Endothelial cell of umbilical vein (primary cell): ENCODE measurements at regions of chr16 and their contacts with region 1.

Region 1: DNA sequence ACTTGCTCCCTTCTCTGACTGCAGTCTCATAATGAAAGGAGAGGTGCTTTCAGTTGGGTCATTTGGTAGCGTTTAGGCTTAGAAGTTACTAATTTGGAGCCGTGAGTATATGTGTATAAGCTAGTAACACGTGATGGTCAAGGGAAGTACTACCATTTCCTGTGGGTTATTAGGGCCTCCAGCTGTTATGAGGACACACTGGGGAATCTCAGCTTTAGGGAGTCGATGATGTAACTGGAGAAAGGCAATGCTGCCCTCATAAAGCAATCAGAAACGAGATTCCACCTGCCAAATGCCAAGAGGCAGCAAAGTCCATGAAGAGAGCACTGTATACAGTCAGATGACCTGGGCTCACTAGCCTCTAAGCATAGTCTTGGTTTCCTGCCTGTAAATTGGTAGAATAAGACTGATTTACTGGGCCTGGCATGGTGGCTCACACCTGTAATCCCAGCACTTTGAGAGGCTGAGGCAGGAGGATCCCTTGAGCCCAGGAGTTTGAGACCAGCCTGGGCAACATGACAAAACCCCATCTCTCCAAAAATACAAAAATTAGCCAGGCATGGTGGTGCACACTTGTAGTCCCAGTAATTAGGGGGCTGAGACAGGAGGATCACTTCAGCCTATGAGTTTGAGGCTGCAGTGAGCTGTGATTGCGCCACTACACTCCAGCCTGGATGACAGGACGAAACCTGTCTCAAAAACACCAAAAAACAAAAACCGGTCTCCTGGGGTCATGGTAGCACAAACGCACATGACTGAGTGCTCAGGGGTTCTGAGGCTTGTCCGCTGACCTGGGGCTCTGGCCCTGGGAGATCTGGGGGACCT is 53.0 kb downstream of the SF3B3 start:
- DNase-seq: peak; percentile 85
- H3K4me3 ChIP-seq: no peak overlapping the region
- H3K27ac ChIP-seq: peak overlapping the region; percentile 41
- H3K4me1 ChIP-seq: peaks cover 55% of the 10 kb centered on the region
- H3K27me3 ChIP-seq: no peaks in the 10 kb centered on the region
- CTCF ChIP-seq: no peak
- POLR2A ChIP-seq: peak; percentile 47

Region 2: DNA sequence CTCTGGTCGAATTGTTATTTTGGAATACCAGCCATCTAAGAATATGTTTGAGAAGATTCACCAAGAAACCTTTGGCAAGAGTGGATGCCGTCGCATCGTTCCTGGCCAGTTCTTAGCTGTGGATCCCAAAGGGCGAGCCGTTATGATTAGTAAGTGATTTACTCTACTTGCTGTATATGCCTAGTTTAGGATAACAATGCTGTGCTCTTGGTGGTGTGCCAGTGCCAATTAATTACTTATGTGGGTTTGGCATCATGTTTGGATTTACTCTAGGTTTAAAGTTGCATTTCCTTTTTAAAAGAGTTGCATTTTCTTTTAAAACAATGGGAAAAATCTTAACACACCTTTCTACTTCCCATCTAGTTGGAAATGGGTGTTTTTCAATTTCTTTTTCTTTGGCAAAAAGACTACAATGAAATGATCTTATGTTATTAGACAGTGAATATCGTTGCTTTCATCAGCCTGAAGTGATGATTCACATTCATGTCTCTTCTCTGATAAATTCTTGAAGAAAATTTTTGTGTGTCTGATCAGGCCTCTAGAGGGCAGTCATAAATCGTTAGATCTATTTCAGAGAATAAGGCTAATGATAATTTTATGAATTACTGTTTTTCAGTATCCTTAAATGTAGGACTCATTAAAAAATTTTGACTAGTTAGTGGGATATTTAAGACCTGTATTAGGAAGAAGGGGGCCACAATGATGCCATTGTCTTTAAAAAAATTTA is 47.4 kb before region 1 on chr16:
- CTCF ChIA-PET with region 1: interaction called, 3 read pairs
- POLR2A ChIA-PET with region 1: no interaction called
- dilution Hi-C with region 1: no loop called
- intact Hi-C with region 1: loop called (anchors 5 kb)
- DNase-seq: peak; percentile 69
- H3K4me3 ChIP-seq: no peak overlapping the region
- H3K27ac ChIP-seq: peak overlapping the region; percentile 10
- H3K4me1 ChIP-seq: peaks cover 28% of the 10 kb centered on the region
- H3K27me3 ChIP-seq: no peaks in the 10 kb centered on the region
- CTCF ChIP-seq: peak in 1 of 2 donors; percentile 23
- POLR2A ChIP-seq: no peak

Region 3: GRCh38 chr16:70589998-70590471 is 13.4 kb after region 1 on chr16:
- CTCF ChIA-PET with region 1: interaction called, 10 read pairs
- POLR2A ChIA-PET with region 1: interaction called, 5 read pairs
- dilution Hi-C with region 1: no loop called
- intact Hi-C with region 1: loop called (anchors 2 kb)
- DNase-seq: peak; percentile 19
- H3K4me3 ChIP-seq: no peak overlapping the region
- H3K27ac ChIP-seq: no peak overlapping the region
- H3K4me1 ChIP-seq: peaks cover 9% of the 10 kb centered on the region
- H3K27me3 ChIP-seq: no peaks in the 10 kb centered on the region
- CTCF ChIP-seq: no peak
- POLR2A ChIP-seq: no peak

Region 4: DNA sequence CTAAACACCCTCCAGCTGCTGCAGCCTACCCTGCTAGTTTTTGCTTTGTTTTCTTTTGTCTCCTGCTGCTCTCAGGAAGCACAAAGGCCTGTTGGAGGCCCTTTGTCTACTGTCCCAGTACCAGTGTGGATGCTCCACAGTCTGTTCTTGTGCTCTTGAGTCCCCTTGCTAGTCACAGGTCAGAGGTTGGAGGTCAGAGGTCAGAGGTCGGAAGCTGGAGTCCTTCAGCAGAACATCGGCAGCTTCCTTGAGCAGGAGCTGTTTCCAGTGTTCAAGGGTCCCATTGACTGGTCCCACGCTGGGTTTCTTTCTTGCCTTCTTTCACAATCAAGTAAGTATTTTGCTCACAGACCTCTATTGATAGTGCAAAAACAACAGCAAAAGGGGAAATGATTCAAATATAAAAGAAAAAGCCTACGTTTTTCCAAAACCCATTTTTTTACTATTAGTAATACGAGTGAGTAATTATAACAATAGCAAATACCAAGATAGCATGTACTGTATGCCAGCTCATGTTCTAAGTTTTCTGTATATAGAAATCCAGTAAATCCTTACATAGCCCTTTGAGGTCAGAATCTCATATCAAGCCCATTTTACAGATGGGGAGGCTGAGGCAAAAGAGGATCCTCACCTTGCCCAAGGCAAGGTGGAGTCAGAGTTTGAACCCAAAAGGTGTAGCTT is 58.8 kb after region 1 on chr16:
- CTCF ChIA-PET with region 1: interaction called, 9 read pairs
- POLR2A ChIA-PET with region 1: interaction called, 4 read pairs
- dilution Hi-C with region 1: no loop called
- intact Hi-C with region 1: loop called (anchors 1 kb)
- DNase-seq: peak; percentile 91
- H3K4me3 ChIP-seq: peak overlapping the region in 1 of 3 experiments; percentile 1
- H3K27ac ChIP-seq: peak overlapping the region; percentile 93
- H3K4me1 ChIP-seq: peaks cover 19% of the 10 kb centered on the region
- H3K27me3 ChIP-seq: no peaks in the 10 kb centered on the region
- CTCF ChIP-seq: no peak
- POLR2A ChIP-seq: no peak

Region 5: GRCh38 chr16:70685938-70686375 is 109.3 kb after region 1 on chr16 and contains the start of gene MTSS2:
- CTCF ChIA-PET with region 1: no interaction called
- POLR2A ChIA-PET with region 1: no interaction called
- dilution Hi-C with region 1: no loop called
- intact Hi-C with region 1: no loop called
- DNase-seq: peak; percentile 89
- H3K4me3 ChIP-seq: peak within 1 kb of the TSS; percentile 58 to 94 (median 61)
- H3K27ac ChIP-seq: peak within 1 kb of the TSS; percentile 34
- H3K4me1 ChIP-seq: peaks cover 21% of the 10 kb centered on the region
- H3K27me3 ChIP-seq: no peaks in the 10 kb centered on the region
- CTCF ChIP-seq: no peak
- POLR2A ChIP-seq: peak; percentile 49
- total RNA-seq, gene MTSS2: 37.6 and 42.3 TPM in 2 replicates

Region 6: DNA sequence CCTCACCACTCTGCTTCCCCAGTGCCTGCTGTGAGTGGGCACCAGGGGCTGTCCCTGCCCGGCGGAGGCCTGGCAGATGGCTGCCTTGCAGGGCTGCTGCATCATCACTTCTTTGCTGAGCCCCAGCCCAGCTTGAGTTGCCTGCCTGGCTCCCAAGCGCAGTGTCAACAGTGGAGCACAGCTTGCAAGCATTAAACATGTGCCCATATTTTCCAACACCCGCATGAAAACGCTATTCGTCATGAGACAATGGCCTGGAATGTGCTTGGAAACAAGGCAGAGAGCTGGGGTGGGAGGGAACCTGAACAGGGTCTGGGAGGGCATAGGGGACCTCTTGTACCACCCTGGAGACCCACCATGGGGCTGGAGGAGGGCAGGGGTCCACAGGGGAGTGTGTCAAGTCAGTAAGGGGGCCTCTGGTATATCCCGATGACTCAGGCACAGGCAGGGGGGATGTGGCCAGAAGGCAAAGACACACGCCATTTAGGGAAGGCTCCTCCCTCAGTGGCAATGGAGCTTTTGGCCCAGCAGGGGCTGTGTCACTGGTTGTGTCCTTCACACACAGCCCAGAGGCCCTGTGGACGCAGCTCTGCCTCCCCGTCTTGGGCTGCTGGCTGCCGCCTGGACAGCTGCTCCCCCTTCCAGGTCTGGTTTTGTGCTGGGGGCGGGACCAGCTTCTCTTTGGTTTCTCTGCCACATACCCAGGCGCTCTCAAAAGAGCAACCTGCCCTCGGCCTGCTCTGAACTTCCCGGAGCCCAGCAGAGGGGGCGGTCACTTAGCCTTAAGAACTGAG is 126.6 kb after region 1 on chr16:
- CTCF ChIA-PET with region 1: no interaction called
- POLR2A ChIA-PET with region 1: no interaction called
- dilution Hi-C with region 1: no loop called
- intact Hi-C with region 1: no loop called
- DNase-seq: no peak
- H3K4me3 ChIP-seq: no peak overlapping the region
- H3K27ac ChIP-seq: no peak overlapping the region
- H3K4me1 ChIP-seq: peaks cover 19% of the 10 kb centered on the region
- H3K27me3 ChIP-seq: no peaks in the 10 kb centered on the region
- CTCF ChIP-seq: no peak
- POLR2A ChIP-seq: no peak